Activated CD8-positive, alpha-beta T cell treated with anti-CD3 and anti-CD28 coated beads for 36 hours (primary cell): ENCODE measurements at regions of chr2 and their contacts with region 1.

Region 1: DNA sequence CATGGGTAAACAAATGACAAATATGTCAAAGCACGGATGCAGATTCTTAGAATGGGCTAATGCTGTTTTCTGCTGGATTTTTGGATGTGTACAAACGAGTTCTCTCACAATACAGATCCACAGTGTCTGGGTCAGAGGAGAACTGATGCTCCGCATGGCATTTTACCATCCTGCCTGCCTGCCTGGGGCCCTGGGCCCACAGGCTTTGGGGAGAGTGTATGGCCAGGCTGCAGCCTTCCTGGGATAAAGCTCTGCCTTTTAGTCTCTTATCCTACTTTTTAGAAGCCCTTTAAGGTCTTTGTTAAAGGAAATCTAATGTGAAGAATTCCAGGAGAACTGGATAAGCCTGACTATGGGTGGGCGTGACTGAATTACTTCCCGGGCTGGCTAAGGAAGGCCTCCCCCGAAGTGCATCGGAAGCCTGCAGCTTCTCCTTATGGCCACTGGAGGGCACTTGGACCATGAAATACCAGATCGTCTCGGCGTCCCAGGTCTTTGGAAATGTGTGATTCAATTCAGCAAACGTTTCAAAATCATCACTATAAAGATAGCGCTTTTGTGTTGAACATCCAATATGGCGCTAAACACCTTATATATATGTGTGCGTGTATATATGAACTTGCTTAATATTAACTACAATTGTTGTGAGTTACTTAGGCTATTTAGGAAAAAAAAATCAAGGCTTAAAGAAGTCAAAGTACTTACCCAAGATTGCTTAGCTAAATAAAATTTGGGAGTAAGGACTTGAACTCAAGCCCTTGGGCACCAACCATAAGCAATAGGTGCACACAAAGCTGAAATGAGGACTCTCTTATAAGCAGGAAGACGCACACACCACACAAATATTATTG is 15.2 kb upstream of the DNPEP start:
- DNase-seq: peak; percentile 79
- ATAC-seq: peak; percentile 99
- H3K4me3 Mint-ChIP-seq: no peak overlapping the region
- H3K27ac Mint-ChIP-seq: no peak overlapping the region
- H3K4me1 Mint-ChIP-seq: no peaks in the 10 kb centered on the region
- H3K27me3 Mint-ChIP-seq: peaks cover 8% of the 10 kb centered on the region
- CTCF ChIP-seq: peak; percentile 77

Region 2: GRCh38 chr2:219199470-219200211 is 203.2 kb before region 1 on chr2:
- CTCF ChIA-PET with region 1: no interaction called
- POLR2A ChIA-PET with region 1: no interaction called
- intact Hi-C with region 1: no loop called
- DNase-seq: no peak
- ATAC-seq: peak; percentile 71
- H3K4me3 Mint-ChIP-seq: peak overlapping the region; percentile 62
- H3K27ac Mint-ChIP-seq: peak overlapping the region; percentile 40
- H3K4me1 Mint-ChIP-seq: peaks cover 17% of the 10 kb centered on the region
- H3K27me3 Mint-ChIP-seq: no peaks in the 10 kb centered on the region
- CTCF ChIP-seq: no peak

Region 3: GRCh38 chr2:219418155-219418569 is 15.3 kb after region 1 on chr2 and contains the start of gene DES:
- CTCF ChIA-PET with region 1: interaction called, 30 read pairs
- POLR2A ChIA-PET with region 1: no interaction called
- intact Hi-C with region 1: no loop called
- DNase-seq: no peak
- ATAC-seq: no peak
- H3K4me3 Mint-ChIP-seq: no peak within 1 kb of the TSS
- H3K27ac Mint-ChIP-seq: no peak within 1 kb of the TSS
- H3K4me1 Mint-ChIP-seq: no peaks in the 10 kb centered on the region
- H3K27me3 Mint-ChIP-seq: peaks cover 26% of the 10 kb centered on the region
- CTCF ChIP-seq: no peak
- total RNA-seq, gene DES: not detected

Region 4: GRCh38 chr2:219441451-219442255 is 38.8 kb after region 1 on chr2:
- CTCF ChIA-PET with region 1: interaction called, 35 read pairs
- POLR2A ChIA-PET with region 1: interaction called, 3 read pairs
- intact Hi-C with region 1: no loop called
- DNase-seq: peak; percentile 51
- ATAC-seq: peak; percentile 61
- H3K4me3 Mint-ChIP-seq: peak overlapping the region; percentile 70
- H3K27ac Mint-ChIP-seq: no peak overlapping the region
- H3K4me1 Mint-ChIP-seq: peaks cover 17% of the 10 kb centered on the region
- H3K27me3 Mint-ChIP-seq: peaks cover 17% of the 10 kb centered on the region
- CTCF ChIP-seq: no peak

Region 5: GRCh38 chr2:219459460-219460311 is 56.8 kb after region 1 on chr2:
- CTCF ChIA-PET with region 1: interaction called, 14 read pairs
- POLR2A ChIA-PET with region 1: no interaction called
- intact Hi-C with region 1: no loop called
- DNase-seq: peak; percentile 62
- ATAC-seq: peak; percentile 50
- H3K4me3 Mint-ChIP-seq: no peak overlapping the region
- H3K27ac Mint-ChIP-seq: peak overlapping the region; percentile 25
- H3K4me1 Mint-ChIP-seq: peaks cover 14% of the 10 kb centered on the region
- H3K27me3 Mint-ChIP-seq: no peaks in the 10 kb centered on the region
- CTCF ChIP-seq: peak; percentile 84

Region 6: GRCh38 chr2:219498280-219499057 is 95.6 kb after region 1 on chr2 and contains the start of gene GMPPA:
- CTCF ChIA-PET with region 1: interaction called, 22 read pairs
- POLR2A ChIA-PET with region 1: interaction called, 3 read pairs
- intact Hi-C with region 1: no loop called
- DNase-seq: peak; percentile 97
- ATAC-seq: peak; percentile 96
- H3K4me3 Mint-ChIP-seq: peak within 1 kb of the TSS; percentile 92
- H3K27ac Mint-ChIP-seq: peak within 1 kb of the TSS; percentile 87
- H3K4me1 Mint-ChIP-seq: peaks cover 34% of the 10 kb centered on the region
- H3K27me3 Mint-ChIP-seq: peaks cover 43% of the 10 kb centered on the region
- CTCF ChIP-seq: no peak
- total RNA-seq, gene GMPPA: 32.4 to 34.2 TPM

Region 7: DNA sequence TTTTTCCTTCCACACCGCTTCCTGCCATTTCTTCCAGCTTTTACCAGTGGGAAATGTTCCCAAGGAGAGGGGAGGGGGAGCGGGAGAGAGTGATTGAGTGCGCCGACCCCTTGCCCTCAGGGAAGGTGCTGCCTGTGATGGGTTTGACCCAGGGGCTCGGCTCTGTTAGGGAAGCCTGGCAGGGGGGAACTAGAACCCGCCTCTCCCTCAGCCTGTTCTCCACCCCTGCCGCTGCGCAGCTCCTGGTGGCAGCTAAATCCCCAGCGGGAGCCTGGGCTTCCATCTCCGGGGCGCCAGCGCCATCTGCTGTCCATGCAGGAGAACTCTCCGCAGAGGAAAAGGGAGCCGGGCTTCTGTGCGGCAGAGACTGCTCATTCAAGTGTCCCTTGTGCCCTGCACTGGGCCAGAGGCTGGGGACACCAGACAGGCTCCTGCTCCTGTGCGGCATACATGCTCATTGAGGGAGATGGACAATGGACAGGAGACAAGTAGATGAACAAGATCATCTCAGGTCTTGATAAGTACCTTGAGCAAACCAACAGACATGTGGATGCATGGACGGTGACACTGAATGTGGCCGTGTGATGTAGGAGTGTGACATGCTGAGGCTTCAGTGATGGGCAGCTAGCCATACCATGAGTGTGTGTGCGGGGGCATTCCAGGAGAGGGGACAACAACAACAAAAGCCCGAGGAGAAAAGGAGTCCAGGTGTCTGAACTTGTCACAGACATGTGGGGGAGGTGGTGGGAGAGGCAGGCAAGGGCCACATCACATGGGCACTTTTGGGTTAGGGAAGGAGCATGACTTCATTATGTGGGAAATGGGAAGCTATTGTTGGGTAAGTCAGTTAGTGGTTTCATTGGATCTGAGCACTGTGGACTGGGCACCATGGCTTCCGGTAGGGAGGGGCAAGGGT is 127.4 kb after region 1 on chr2:
- CTCF ChIA-PET with region 1: interaction called, 159 read pairs
- POLR2A ChIA-PET with region 1: no interaction called
- intact Hi-C with region 1: loop called (anchors 5 kb)
- DNase-seq: peak; percentile 82
- ATAC-seq: peak; percentile 97
- H3K4me3 Mint-ChIP-seq: no peak overlapping the region
- H3K27ac Mint-ChIP-seq: no peak overlapping the region
- H3K4me1 Mint-ChIP-seq: no peaks in the 10 kb centered on the region
- H3K27me3 Mint-ChIP-seq: peaks cover 44% of the 10 kb centered on the region
- CTCF ChIP-seq: peak; percentile 96

Region 8: GRCh38 chr2:219628235-219628985 is 225.5 kb after region 1 on chr2:
- CTCF ChIA-PET with region 1: no interaction called
- POLR2A ChIA-PET with region 1: no interaction called
- intact Hi-C with region 1: no loop called
- DNase-seq: no peak
- ATAC-seq: no peak
- H3K4me3 Mint-ChIP-seq: no peak overlapping the region
- H3K27ac Mint-ChIP-seq: no peak overlapping the region
- H3K4me1 Mint-ChIP-seq: no peaks in the 10 kb centered on the region
- H3K27me3 Mint-ChIP-seq: peaks cover 19% of the 10 kb centered on the region
- CTCF ChIP-seq: no peak

Region 9: GRCh38 chr2:220296174-220296573 is 893.3 kb after region 1 on chr2:
- CTCF ChIA-PET with region 1: no interaction called
- POLR2A ChIA-PET with region 1: no interaction called
- intact Hi-C with region 1: no loop called
- DNase-seq: no peak
- ATAC-seq: no peak
- H3K4me3 Mint-ChIP-seq: no peak overlapping the region
- H3K27ac Mint-ChIP-seq: no peak overlapping the region
- H3K4me1 Mint-ChIP-seq: no peaks in the 10 kb centered on the region
- H3K27me3 Mint-ChIP-seq: peaks cover 1% of the 10 kb centered on the region
- CTCF ChIP-seq: no peak